HCT116 (cell line): ENCODE measurements at regions of chr5 and their contacts with region 1.

Region 1: GRCh38 chr5:140690941-140691924 is at the starts of genes HARS1 and HARS2:
- DNase-seq: peak; percentile 97
- ATAC-seq: peak; percentile 96
- H3K4me3 ChIP-seq: peak within 1 kb of the TSS; percentile 78 to 94
- H3K27ac ChIP-seq: peak within 1 kb of the TSS; percentile 90
- H3K4me1 ChIP-seq: peaks cover 0 to 9% of the 10 kb centered on the region in 2 experiments; a peak in 2 of 4 replicates
- H3K27me3 ChIP-seq: no peaks in the 10 kb centered on the region
- CTCF ChIP-seq: no peak
- POLR2A ChIP-seq: peak; percentile 94
- RAD21 ChIP-seq: no peak
- total RNA-seq, gene HARS1: 91.1 TPM
- total RNA-seq, gene HARS2: 38.8 TPM

Region 2: DNA sequence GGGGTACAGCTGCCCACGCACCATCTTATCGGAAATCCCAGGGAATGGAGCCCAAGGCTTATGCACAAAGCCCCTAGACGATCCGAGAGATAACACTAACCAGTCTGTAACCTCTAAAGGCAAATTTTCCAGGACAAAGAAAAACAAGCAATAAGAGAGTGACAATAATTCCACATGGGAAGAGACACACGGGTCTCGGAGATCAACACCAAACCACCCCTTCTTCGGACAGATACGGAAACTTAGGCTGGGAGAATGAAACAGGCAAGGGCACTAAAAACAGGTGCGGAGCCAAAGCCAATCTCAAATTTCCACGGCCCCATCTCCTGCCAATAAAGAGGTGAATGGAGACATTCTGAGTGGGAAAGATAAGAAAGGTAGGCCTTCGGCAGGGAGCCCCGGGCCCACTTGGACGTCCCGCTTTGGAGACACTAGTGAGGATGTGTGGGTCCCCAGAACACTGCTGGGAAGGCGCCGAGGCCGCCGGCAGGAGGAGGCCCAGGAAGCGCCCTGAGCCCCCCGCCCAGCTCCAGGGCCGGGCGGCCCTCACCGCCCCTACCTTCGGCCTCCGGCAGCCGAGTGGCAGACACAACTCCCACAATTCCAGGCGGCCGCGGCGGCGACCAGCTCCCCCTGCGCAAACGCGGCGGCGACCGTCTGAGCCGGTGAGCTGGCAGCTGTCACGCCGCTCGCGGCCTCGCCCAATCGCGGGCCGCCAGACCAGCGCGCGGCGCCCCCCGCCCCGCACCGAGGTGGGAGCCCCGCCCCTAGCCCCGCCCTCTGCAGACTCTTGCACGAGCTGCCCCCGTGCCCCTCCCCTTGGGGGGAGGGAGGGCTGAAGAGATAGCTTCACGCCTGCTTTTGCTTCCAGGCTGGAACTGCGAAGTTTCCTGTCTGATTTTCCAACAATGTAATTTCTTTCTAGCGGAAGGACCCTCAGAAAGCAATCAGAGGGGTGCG is 1493.2 kb before region 1 on chr5 and contains the start of gene SIL1:
- CTCF ChIA-PET with region 1: no interaction called
- POLR2A ChIA-PET with region 1: no interaction called
- RAD21 ChIA-PET with region 1: no interaction called
- intact Hi-C with region 1: no loop called
- DNase-seq: peak; percentile 82
- ATAC-seq: peak; percentile 98
- H3K4me3 ChIP-seq: peak within 1 kb of the TSS; percentile 81 to 96
- H3K27ac ChIP-seq: peak within 1 kb of the TSS; percentile 80
- H3K4me1 ChIP-seq: peaks cover 7 to 13% of the 10 kb centered on the region in 2 experiments; a peak in 3 of 4 replicates
- H3K27me3 ChIP-seq: no peaks in the 10 kb centered on the region
- CTCF ChIP-seq: no peak
- POLR2A ChIP-seq: peak; percentile 83
- RAD21 ChIP-seq: no peak
- total RNA-seq, gene SIL1: 34.0 TPM

Region 3: GRCh38 chr5:140664359-140665119 is 26.7 kb before region 1 on chr5 and contains the start of gene WDR55:
- CTCF ChIA-PET with region 1: no interaction called
- POLR2A ChIA-PET with region 1: no interaction called
- RAD21 ChIA-PET with region 1: no interaction called
- intact Hi-C with region 1: loop called (anchors 2 kb)
- DNase-seq: peak; percentile 83
- ATAC-seq: peak; percentile 95
- H3K4me3 ChIP-seq: peak within 1 kb of the TSS; percentile 94 to 96
- H3K27ac ChIP-seq: peak within 1 kb of the TSS; percentile 74
- H3K4me1 ChIP-seq: peaks cover 2 to 16% of the 10 kb centered on the region in 2 experiments; a peak in 2 of 4 replicates
- H3K27me3 ChIP-seq: no peaks in the 10 kb centered on the region
- CTCF ChIP-seq: no peak
- POLR2A ChIP-seq: peak; percentile 85
- RAD21 ChIP-seq: no peak
- total RNA-seq, gene WDR55: 37.2 TPM